Motor neuron (in vitro differentiated cells): ENCODE measurements at regions of chr3 and their contacts with region 1.

Region 1: GRCh38 chr3:141561426-141562034 is 74.7 kb downstream of the RASA2 start:
- ATAC-seq: peak in 2 of 8 experiments; percentile 15 to 36
- H3K4me3 ChIP-seq: no peak overlapping the region
- H3K27ac ChIP-seq: no peak overlapping the region
- H3K4me1 ChIP-seq: peaks cover 0 to 4% of the 10 kb centered on the region in 2 donors

Region 2: GRCh38 chr3:141336672-141337522 is 224.6 kb before region 1 on chr3:
- in situ Hi-C with region 1: loop called in 1 of 9 experiments (anchors 25 kb)
- ATAC-seq: peak in 7 of 8 experiments; percentile 95 to 99 (median 98)
- H3K4me3 ChIP-seq: no peak overlapping the region
- H3K27ac ChIP-seq: peak overlapping the region; percentile 80 to 86
- H3K4me1 ChIP-seq: peaks cover 38 to 40% of the 10 kb centered on the region in 2 donors

Region 3: DNA sequence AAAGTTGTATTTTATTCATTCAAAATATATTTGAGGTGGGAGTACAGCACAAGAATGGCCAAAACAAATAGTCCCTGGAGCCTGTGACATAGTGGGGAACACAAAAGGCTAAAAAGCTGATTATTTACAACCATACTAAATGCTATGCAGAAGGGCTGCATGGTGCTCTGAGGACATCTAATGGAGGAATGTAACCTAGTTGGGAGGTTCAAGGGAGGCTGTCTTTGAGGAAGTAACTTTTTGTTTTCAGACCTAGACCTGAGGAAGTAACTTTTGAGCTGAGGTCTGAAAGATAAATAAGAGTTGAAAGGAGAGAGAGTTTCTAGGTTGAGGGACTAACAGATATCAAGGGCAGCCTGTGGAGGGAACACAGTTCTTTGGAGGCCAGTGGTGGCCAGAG is 109.5 kb before region 1 on chr3:
- in situ Hi-C with region 1: loop called in 4 of 9 experiments (anchors 10 to 25 kb)
- ATAC-seq: peak; percentile 12 to 85 (median 57)
- H3K4me3 ChIP-seq: no peak overlapping the region
- H3K27ac ChIP-seq: no peak overlapping the region
- H3K4me1 ChIP-seq: peaks cover 6 to 17% of the 10 kb centered on the region in 2 donors

Region 4: GRCh38 chr3:141460097-141460704 is 101.3 kb before region 1 on chr3:
- in situ Hi-C with region 1: loop called in 5 of 9 experiments (anchors 10 to 25 kb)
- ATAC-seq: peak; percentile 57 to 100 (median 100)
- H3K4me3 ChIP-seq: no peak overlapping the region
- H3K27ac ChIP-seq: no peak overlapping the region
- H3K4me1 ChIP-seq: peaks cover 0 to 3% of the 10 kb centered on the region in 2 donors

Region 5: GRCh38 chr3:141998669-141999290 is 437.2 kb after region 1 on chr3:
- in situ Hi-C with region 1: no loop called
- ATAC-seq: peak in 3 of 8 experiments; percentile 25 to 64 (median 36)
- H3K4me3 ChIP-seq: no peak overlapping the region
- H3K27ac ChIP-seq: no peak overlapping the region
- H3K4me1 ChIP-seq: peaks cover 5% of the 10 kb centered on the region in 2 donors

Region 6: DNA sequence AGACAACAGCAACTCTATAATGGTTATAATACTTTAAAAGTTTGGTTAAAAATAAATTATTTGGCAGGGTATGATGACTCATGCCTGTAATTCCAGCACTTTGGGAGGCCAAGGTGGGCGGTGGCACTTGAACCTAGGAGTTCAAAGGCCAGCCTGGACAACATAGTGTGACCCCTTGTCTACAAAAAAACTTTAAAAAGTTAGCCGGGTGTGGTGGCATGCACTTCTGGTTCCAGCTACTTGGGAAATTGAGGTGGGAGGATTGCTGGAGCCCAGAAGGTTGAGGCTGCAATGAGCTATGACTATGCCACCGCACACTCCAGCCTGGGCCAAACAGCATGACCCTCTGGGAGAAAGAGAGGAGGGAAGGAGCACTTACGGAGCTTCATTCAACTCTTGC is 1154.6 kb after region 1 on chr3:
- in situ Hi-C with region 1: no loop called
- ATAC-seq: no peak
- H3K4me3 ChIP-seq: no peak overlapping the region
- H3K27ac ChIP-seq: no peak overlapping the region
- H3K4me1 ChIP-seq: no peaks in the 10 kb centered on the region